Activated naive CD4-positive, alpha-beta T cell treated with anti-CD3 and anti-CD28 coated beads for 36 hours (primary cell): ENCODE measurements at regions of chr10 and their contacts with region 1.

Region 1: GRCh38 chr10:86755740-86756510 is 494 bp upstream of the BMPR1A start:
- DNase-seq: peak; percentile 86
- H3K4me3 Mint-ChIP-seq: peak overlapping the region; percentile 76
- H3K27ac Mint-ChIP-seq: no peak overlapping the region
- H3K4me1 Mint-ChIP-seq: peaks cover 28% of the 10 kb centered on the region
- H3K27me3 Mint-ChIP-seq: peaks cover 31% of the 10 kb centered on the region

Region 2: GRCh38 chr10:86798611-86799010 is 42.7 kb after region 1 on chr10:
- CTCF ChIA-PET with region 1: no interaction called
- intact Hi-C with region 1: loop called (anchors 2 kb)
- DNase-seq: peak; percentile 19
- H3K4me3 Mint-ChIP-seq: no peak overlapping the region
- H3K27ac Mint-ChIP-seq: no peak overlapping the region
- H3K4me1 Mint-ChIP-seq: peaks cover 18% of the 10 kb centered on the region
- H3K27me3 Mint-ChIP-seq: no peaks in the 10 kb centered on the region

Region 3: GRCh38 chr10:86888585-86889381 is 132.9 kb after region 1 on chr10:
- CTCF ChIA-PET with region 1: no interaction called
- intact Hi-C with region 1: loop called (anchors 2 kb)
- DNase-seq: peak; percentile 8
- H3K4me3 Mint-ChIP-seq: no peak overlapping the region
- H3K27ac Mint-ChIP-seq: no peak overlapping the region
- H3K4me1 Mint-ChIP-seq: peaks cover 6% of the 10 kb centered on the region
- H3K27me3 Mint-ChIP-seq: no peaks in the 10 kb centered on the region